AG04449 (cell line): ENCODE measurements at regions of chr6 and their contacts with region 1.

Region 1: GRCh38 chr6:129370268-129370916 is 339.6 kb downstream of the ARHGAP18 start:
- DNase-seq: no peak
- H3K4me3 ChIP-seq: no peak overlapping the region
- CTCF ChIP-seq: peak; percentile 46

Region 2: DNA sequence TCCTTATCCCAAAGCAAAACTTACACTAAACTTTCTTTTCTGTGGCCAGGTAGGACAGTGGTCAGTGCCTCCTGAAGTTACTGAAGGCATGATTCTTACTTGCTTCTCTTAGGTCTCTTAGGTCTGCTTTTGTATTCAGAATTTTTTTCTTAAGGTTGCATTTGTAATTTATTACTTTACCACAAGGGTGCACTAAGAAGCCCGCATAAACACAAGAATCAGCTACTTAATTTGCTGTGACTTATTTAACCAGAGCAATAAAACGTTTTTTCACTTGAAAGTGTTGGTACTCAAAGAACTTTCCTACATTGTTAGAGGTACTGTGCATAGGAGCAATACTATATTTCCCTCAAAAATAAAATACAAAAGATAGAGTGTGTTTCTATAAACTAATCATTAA is 562.8 kb before region 1 on chr6:
- CTCF ChIA-PET with region 1: interaction called, 22 read pairs
- POLR2A ChIA-PET with region 1: no interaction called
- DNase-seq: peak; percentile 19
- H3K4me3 ChIP-seq: no peak overlapping the region
- CTCF ChIP-seq: peak; percentile 16

Region 3: GRCh38 chr6:129073691-129074395 is 296.5 kb before region 1 on chr6:
- CTCF ChIA-PET with region 1: no interaction called
- POLR2A ChIA-PET with region 1: no interaction called
- DNase-seq: peak; percentile 2
- H3K4me3 ChIP-seq: no peak overlapping the region
- CTCF ChIP-seq: no peak

Region 4: DNA sequence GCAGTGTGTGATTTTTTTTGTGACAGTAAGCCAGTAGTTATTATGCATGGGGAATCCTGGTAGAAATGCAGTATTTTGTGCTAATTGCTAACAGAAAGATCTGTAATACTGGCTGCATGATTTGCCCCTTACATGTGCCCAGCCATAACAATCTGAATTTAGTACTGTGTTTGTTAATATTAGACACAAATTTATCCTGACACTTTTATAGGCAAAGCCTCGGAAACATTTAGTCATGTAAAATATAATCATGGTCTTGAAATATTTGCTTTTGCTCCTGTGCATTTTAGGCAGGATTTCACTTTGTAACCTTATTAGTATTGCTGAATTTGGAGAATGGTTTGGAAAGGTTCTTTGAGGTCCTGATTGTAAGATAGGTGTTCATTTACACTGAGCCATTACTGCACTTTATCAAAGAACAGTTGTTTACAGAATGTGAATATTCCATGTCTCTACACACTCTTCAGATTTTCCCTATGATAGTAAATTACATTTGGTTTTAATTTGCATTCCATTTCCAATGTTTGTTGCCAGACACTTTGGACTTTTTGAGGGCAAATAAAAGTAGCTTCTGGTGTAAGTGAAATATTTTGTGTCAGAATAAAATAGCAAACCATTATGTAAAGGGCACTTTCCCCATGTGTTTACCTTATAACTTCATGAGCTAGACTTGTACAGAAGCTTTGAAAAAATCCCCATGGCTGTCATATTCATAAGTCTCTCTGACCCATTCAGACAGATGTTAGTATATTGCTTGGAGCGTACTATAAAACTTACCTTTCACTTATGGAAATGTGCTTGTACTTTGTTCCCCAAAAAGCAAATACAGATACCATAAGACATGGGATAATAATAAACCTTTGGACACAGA is 10.3 kb before region 1 on chr6:
- CTCF ChIA-PET with region 1: interaction called, 14 read pairs
- POLR2A ChIA-PET with region 1: no interaction called
- DNase-seq: no peak
- H3K4me3 ChIP-seq: no peak overlapping the region
- CTCF ChIP-seq: no peak

Region 5: GRCh38 chr6:129381885-129382284 is 11.5 kb after region 1 on chr6:
- CTCF ChIA-PET with region 1: interaction called, 15 read pairs
- POLR2A ChIA-PET with region 1: no interaction called
- DNase-seq: no peak
- H3K4me3 ChIP-seq: no peak overlapping the region
- CTCF ChIP-seq: no peak

Region 6: DNA sequence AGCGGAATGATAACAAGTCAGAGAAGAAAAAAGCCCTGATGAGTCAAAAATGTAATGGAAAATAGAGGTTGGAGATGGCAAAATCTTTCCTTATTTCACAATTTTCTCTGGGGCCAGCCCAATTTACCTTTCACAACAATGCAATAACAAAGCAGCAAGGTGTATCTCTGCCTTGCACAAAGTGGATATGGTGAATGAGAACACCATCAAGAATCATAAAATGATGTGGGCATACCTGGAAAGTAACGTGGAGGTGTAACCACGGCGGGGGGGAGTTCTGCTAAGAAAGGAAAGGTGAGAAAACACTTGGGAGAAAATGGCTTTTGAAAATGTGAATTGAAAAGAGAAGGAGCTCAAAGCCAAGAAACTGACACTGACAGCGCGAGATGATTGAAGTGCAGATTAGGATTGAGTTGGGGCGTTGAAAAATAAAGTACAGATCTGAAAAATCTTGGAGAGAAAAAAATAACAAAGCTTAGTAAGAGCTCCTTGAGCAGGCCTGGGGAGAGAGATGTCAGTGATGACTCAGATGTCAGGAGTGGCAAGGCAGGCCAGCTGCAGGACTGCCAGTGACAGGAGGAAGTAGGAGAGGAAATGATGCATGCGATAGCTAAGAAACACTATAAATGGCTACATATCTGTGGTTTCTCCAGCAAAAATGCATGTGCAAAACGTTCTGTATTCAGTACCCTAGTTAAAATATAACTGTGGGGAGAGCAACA is 313.4 kb after region 1 on chr6:
- CTCF ChIA-PET with region 1: no interaction called
- POLR2A ChIA-PET with region 1: no interaction called
- DNase-seq: peak; percentile 98
- H3K4me3 ChIP-seq: no peak overlapping the region; the same call in 1 of the 2 replicates
- CTCF ChIP-seq: no peak

Region 7: GRCh38 chr6:130105996-130106704 is 735.8 kb after region 1 on chr6:
- CTCF ChIA-PET with region 1: no interaction called
- POLR2A ChIA-PET with region 1: no interaction called
- DNase-seq: no peak
- H3K4me3 ChIP-seq: no peak overlapping the region
- CTCF ChIP-seq: no peak